HEK293 (cell line): ENCODE measurements at regions of chr20 and their contacts with region 1.

Region 1: DNA sequence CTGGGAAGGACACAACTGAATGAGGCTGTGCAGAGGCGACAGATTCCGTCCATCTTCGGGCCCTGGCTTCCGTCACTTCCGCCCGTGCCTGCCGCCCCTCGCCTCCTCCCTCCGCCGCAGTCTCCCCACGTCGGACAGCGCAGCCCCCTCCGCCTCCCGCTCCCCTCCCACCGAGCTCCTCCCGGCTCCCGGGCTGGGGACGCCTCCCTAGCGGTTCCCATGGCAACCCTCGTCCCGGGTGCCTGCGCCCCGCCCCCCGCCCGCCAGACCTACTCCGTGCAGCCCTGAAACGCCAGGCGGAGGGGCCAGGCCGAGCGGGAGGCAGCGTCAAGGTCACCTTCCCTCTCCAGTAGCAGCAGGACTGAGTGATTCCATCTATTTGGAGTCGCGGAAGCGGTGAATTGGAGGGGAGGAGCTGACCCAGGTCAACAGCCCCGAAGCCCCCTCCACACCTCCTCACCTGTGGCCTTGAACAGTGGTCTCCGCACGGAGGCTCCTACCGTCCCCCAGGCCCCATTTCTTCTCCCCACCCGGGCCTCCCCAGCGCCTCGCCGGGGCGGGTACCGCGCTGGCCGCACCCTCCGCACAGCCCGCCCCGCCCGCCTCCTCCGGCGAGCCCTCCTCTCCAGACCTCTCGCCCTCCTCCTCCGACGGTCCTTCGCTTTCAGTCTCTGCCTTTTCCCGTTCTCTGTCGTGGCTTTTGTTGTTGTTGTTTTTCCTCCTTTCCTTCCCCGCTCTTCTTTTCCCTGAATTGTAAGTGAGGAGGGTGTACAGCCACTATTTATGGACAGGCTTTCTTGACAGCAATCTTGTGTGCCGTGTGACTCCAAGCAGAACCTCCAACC is 951 bp downstream of the NRSN2 start:
- H3K4me3 ChIP-seq: peak overlapping the region; percentile 50
- H3K27ac ChIP-seq: peak overlapping the region; percentile 90
- H3K4me1 ChIP-seq: peaks cover 10% of the 10 kb centered on the region
- CTCF ChIP-seq: peak; percentile 18; the same call in 1 of the 2 replicates

Region 2: DNA sequence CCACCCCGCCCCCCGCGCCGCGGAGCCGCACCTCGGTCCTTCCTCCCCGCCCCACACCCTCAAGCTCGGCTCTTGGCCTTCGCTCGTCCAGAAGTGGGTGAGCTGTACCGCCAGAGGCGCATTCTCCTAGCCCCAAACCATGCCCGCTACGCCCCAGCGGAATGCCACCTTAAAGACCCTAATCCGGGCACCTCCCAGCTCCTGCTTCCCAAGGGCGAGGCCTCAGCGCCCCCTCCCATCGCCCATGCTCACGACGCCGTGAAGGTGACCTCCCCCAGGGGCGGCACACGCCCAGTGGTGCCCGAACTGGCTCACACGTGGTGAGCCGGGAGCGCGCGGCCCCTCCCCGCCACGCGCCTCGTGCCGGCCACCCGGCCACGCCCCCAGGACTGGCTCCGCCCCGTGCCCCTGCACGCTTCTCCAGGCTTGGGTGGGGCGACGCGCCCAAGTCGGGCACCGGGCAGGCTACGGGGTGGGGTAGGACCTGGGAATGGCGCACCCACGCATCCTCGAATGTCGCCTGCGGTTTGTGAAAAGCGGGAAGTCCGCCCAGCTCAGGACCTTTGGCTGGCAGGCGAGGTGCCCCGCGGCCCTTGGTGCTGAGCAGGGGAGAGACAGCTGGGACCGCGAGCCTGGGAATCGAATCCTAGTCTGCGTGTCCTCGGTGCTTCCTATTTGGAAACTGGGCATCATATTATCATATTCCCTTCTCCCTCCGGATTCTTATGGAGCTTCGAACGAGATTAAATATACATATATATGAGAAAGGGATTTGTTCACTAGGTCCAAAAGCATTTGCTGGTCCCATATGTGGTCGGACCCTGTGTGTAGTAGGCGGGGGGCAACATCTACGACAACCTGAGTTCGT is 23.5 kb before region 1 on chr20:
- CTCF ChIA-PET with region 1: interaction called, 3 read pairs
- POLR2A ChIA-PET with region 1: interaction called, 23 read pairs
- H3K4me3 ChIP-seq: peak overlapping the region; percentile 43
- H3K27ac ChIP-seq: peak overlapping the region; percentile 99
- H3K4me1 ChIP-seq: peaks cover 10% of the 10 kb centered on the region
- CTCF ChIP-seq: peak; percentile 87

Region 3: DNA sequence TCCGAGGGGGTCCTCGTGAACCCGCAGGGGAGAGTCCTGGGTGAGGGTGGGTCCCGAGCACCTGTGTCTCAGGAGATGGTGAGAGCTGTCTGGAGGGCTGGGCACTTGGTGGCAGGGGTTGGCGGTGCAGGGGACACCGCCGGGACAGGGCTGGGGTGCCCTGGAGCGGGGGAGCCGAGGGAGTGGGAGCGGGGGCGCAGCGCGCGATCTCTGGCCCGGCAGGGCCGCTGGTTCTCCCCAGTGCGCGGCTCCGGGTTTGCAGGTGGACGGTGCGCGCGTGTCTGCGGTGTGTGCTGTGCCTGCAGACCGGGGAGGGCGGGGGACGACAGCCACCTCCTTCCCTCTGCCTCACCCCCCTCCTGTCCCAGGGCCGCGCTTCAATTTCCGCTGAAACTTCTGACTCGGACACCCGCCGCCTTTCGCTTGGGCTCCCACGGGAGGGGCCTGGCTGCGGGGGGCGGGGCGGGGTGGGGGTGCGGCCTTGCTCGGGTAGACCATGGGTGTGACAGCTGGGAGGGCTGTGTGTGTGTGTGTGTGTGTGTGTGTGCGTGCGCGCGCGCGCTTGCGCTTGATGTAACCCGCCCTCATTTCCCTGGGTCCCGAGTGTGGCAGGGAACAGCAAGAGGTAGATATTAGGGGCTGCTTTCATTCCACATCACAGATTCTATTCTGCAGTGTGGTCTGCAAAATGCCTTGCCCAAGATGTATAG is 33.9 kb after region 1 on chr20:
- CTCF ChIA-PET with region 1: no interaction called
- POLR2A ChIA-PET with region 1: interaction called, 13 read pairs
- H3K4me3 ChIP-seq: peak overlapping the region; percentile 60
- H3K27ac ChIP-seq: peak overlapping the region; percentile 87; the same call in 1 of the 2 replicates
- H3K4me1 ChIP-seq: peaks cover 9% of the 10 kb centered on the region; the same call in 1 of the 2 replicates
- CTCF ChIP-seq: peak; percentile 43

Region 4: GRCh38 chr20:407133-407952 is 59.5 kb after region 1 on chr20:
- CTCF ChIA-PET with region 1: interaction called, 4 read pairs
- POLR2A ChIA-PET with region 1: interaction called, 13 read pairs
- H3K4me3 ChIP-seq: peak overlapping the region; percentile 34
- H3K27ac ChIP-seq: peak overlapping the region; percentile 76
- H3K4me1 ChIP-seq: peaks cover 6% of the 10 kb centered on the region
- CTCF ChIP-seq: peak; percentile 93